Caco-2 (cell line): ENCODE measurements at regions of chr13 and their contacts with region 1.

Region 1: DNA sequence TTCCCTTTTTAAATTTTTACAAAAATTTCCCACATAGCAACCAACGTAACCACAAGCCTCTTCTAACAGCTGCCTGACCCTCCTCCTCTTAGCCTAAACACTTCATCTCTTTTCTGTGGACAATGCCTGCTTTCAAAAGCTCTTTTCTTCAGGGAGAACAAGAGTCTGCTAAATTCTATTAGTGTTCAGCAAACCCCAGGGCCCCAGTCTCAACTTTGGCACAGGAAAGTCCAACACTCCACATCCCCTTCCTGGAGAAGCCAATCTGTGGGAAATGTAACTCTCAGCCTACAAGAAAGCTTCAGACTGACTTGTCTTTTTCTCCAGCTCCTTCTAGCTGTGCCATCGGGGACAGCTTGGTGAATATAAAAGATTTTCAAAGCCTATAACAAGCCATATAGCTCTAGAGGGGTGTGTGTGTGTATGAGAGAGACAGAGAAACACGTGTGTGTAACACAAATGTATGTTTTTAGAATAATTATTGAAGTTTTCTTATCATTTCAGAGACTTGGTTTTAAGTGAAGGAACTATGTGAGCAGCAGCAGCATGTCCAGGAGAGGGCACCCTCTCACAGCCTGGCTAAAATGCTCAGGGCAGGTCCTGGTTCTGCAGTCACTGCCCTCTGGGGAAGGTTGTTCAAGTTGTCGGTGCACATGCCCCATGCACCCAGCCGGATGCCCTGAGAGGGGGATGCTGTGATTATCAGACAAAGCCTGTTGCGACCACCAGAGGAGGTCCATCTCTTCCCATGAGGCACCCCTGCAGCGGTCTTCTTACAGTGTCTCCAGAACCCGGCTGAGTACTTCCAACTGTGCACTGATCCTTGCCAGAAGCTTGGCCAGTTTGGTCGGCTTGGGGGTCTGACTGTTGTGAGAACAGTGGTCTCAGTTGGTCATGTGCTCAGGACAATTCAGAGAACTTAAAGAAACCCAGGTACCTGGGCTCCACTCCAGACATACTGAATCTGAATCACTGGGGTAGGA is 34.4 kb downstream of the CCDC70 start:
- DNase-seq: peak; percentile 66 to 75
- H3K4me3 ChIP-seq: no peak overlapping the region
- H3K4me3 Mint-ChIP-seq: no peak overlapping the region
- H3K27ac Mint-ChIP-seq: no peak overlapping the region
- H3K4me1 ChIP-seq: no peaks in the 10 kb centered on the region
- H3K4me1 Mint-ChIP-seq: peaks cover 8% of the 10 kb centered on the region
- H3K27me3 ChIP-seq: no peaks in the 10 kb centered on the region
- H3K27me3 Mint-ChIP-seq: no peaks in the 10 kb centered on the region
- CTCF ChIP-seq: peak; percentile 76 to 89

Region 2: GRCh38 chr13:51814825-51815650 is 81.2 kb before region 1 on chr13:
- CTCF ChIA-PET with region 1: interaction called, 3 read pairs
- POLR2A ChIA-PET with region 1: no interaction called
- intact Hi-C with region 1: loop called (anchors 1 kb)
- DNase-seq: peak; percentile 68 to 80
- H3K4me3 ChIP-seq: no peak overlapping the region
- H3K4me3 Mint-ChIP-seq: peak overlapping the region; percentile 62
- H3K27ac Mint-ChIP-seq: no peak overlapping the region
- H3K4me1 ChIP-seq: no peaks in the 10 kb centered on the region
- H3K4me1 Mint-ChIP-seq: peaks cover 14% of the 10 kb centered on the region
- H3K27me3 ChIP-seq: no peaks in the 10 kb centered on the region
- H3K27me3 Mint-ChIP-seq: peaks cover 19% of the 10 kb centered on the region
- CTCF ChIP-seq: peak; percentile 83 to 88

Region 3: DNA sequence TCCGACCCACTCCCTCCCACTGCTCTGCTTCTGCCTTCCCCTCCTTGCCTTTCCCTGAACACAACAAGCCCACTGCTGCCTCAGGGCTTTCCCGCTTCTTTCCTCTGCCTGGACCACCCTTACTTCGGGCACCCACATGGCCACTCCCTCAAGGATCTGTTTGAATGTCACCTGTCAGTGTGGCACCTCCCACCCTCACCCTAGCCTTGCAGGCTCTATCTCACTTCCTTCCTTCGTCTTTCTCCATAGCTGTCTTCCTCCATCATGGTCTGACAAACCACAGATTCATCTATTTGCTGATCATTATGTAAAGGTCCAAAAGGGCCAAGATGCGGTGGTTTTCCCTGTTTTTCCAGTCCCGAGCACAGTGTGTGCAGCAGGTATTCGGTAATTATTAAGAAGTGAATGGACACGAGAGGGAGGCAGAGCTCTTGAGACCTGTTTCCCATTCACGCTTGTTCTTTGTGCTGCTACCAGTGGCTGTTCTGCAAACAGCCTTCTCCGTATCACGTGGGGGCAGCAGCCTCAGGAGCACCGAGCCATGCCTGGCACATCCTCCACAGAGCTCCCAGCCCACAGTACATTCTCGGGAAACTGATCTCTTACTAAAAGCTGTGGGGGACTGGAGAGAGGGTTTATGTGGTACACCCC is 15.8 kb after region 1 on chr13:
- CTCF ChIA-PET with region 1: interaction called, 4 read pairs
- POLR2A ChIA-PET with region 1: no interaction called
- intact Hi-C with region 1: loop called (anchors 2 kb)
- DNase-seq: peak; percentile 69 to 75
- H3K4me3 ChIP-seq: no peak overlapping the region
- H3K4me3 Mint-ChIP-seq: peak overlapping the region; percentile 13
- H3K27ac Mint-ChIP-seq: peak overlapping the region; percentile 21
- H3K4me1 ChIP-seq: peaks cover 18% of the 10 kb centered on the region
- H3K4me1 Mint-ChIP-seq: peaks cover 13% of the 10 kb centered on the region
- H3K27me3 ChIP-seq: no peaks in the 10 kb centered on the region
- H3K27me3 Mint-ChIP-seq: no peaks in the 10 kb centered on the region
- CTCF ChIP-seq: peak in 1 of 2 experiments; percentile 50

Region 4: DNA sequence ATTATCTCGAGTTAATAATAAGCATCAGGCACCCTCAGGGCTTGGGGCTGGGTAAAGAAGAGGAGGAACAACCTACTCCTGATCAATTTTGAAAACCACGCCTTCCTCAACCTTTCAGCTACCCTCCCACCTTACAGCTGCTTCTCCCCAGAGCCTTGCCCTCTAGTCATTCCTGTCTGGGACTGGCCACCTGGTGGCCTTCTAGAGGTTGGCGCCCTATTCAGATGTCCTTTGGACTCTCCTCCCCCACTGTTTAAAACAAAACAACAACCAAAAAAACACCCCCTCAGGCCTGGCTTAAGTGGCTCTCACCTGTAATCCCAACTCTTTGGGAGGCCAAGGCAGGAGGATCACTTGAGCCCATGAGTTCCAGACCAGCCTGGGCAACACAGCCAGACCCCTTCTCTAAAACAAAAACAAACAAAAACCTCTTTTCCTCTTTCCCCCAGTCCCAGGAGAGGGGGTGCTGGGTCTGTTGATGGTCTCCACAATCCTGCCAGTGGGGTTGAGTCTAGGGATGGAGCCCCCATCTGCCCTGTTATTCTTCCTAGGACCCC is 27.9 kb after region 1 on chr13:
- CTCF ChIA-PET with region 1: interaction called, 5 read pairs
- POLR2A ChIA-PET with region 1: no interaction called
- intact Hi-C with region 1: loop called (anchors 1 kb)
- DNase-seq: peak in 1 of 2 experiments; percentile 56
- H3K4me3 ChIP-seq: no peak overlapping the region
- H3K4me3 Mint-ChIP-seq: no peak overlapping the region
- H3K27ac Mint-ChIP-seq: no peak overlapping the region
- H3K4me1 ChIP-seq: no peaks in the 10 kb centered on the region
- H3K4me1 Mint-ChIP-seq: no peaks in the 10 kb centered on the region
- H3K27me3 ChIP-seq: no peaks in the 10 kb centered on the region
- H3K27me3 Mint-ChIP-seq: no peaks in the 10 kb centered on the region
- CTCF ChIP-seq: peak; percentile 54 to 55

Region 5: DNA sequence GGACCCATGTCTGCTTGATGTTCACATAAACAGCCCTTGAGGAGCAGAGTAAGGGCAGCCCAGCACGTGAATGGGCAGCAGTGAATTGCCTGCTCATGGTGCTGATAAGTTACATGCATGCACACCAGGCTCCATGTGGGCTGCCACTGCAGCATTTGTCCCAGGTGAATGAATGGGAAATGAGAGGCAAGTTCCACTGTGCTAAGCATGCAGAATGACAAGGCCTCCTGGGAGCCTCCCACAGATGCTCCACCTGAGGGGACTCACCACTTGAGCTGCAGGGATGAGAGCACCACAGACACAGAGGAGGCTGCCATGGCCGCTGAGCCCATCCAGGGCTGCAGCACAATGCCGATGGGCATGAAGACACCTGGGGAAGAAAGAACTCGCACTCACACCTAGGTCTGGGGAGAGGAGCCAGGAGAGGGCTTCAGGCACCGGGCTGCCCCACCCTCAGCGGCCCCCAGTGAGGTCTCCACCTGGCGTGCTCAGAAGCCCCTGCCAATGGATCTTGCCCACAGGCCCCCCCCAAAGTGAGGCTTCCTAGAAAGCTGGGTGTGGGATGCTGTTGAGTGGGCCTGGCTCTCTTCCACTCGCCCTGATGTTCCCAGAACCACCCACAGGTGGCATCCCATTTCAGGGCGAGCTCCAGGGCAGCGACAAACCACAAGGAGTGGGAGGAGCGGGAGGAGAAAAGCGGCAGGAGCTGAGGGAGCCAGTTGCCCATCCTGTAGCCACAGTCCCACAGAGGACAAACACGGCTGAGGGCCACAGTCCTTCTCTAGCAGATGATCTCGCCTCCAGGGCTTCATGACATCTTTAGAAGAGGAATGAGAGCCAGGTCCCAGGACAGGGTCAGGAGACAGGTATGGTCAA is 39.4 kb after region 1 on chr13:
- CTCF ChIA-PET with region 1: no interaction called
- POLR2A ChIA-PET with region 1: no interaction called
- intact Hi-C with region 1: no loop called
- DNase-seq: peak; percentile 47 to 56
- H3K4me3 ChIP-seq: no peak overlapping the region
- H3K4me3 Mint-ChIP-seq: no peak overlapping the region
- H3K27ac Mint-ChIP-seq: no peak overlapping the region
- H3K4me1 ChIP-seq: no peaks in the 10 kb centered on the region
- H3K4me1 Mint-ChIP-seq: no peaks in the 10 kb centered on the region
- H3K27me3 ChIP-seq: no peaks in the 10 kb centered on the region
- H3K27me3 Mint-ChIP-seq: no peaks in the 10 kb centered on the region
- CTCF ChIP-seq: peak; percentile 56 to 73

Region 6: DNA sequence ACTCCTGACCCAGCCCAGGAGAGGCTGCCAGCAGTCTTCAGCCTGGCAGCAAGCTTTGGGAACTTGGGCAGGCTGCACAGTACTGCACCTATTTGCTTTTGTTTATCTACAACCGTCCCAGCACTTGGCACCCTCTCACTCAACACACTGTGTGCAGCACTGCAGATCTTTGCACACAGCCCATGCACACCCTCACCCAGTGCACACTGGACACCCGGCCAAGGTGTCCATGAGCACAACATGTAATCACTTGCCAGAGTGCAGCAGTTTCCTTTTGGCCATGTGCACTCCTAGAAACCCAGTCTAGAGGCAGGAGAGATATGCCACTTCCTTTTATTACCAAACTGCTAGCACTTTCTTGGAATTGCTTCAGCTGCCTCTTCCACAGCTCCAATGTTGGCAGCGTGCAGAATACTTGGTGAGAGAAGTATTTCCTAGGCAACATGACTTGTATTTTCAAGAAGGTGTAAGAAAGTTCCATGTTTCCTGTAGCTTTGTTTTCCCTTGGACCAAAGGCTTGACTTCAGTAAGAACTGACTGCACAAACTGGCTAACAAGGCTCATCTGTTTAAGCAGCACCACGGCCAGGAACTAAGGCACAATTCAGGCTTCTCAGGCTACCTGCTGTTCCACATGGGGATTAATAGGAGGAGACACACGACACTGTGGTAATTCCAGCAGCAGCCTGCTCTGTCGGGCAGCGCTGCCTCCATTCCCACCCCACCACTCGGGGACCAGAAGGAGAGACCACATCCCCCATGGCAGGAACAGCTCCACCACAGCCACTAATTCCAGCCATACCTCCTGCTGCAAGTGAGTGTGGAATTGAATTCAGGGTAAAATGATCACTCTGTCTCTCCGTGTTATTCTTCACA is 99.7 kb after region 1 on chr13:
- CTCF ChIA-PET with region 1: interaction called, 3 read pairs
- POLR2A ChIA-PET with region 1: no interaction called
- intact Hi-C with region 1: loop called (anchors 1 kb)
- DNase-seq: no peak
- H3K4me3 ChIP-seq: no peak overlapping the region
- H3K4me3 Mint-ChIP-seq: no peak overlapping the region
- H3K27ac Mint-ChIP-seq: no peak overlapping the region
- H3K4me1 ChIP-seq: peaks cover 51% of the 10 kb centered on the region
- H3K4me1 Mint-ChIP-seq: peaks cover 44% of the 10 kb centered on the region
- H3K27me3 ChIP-seq: no peaks in the 10 kb centered on the region
- H3K27me3 Mint-ChIP-seq: no peaks in the 10 kb centered on the region
- CTCF ChIP-seq: no peak